ENCODE measurements at regions of chr11 and their contacts with region 1.

Region 1: DNA sequence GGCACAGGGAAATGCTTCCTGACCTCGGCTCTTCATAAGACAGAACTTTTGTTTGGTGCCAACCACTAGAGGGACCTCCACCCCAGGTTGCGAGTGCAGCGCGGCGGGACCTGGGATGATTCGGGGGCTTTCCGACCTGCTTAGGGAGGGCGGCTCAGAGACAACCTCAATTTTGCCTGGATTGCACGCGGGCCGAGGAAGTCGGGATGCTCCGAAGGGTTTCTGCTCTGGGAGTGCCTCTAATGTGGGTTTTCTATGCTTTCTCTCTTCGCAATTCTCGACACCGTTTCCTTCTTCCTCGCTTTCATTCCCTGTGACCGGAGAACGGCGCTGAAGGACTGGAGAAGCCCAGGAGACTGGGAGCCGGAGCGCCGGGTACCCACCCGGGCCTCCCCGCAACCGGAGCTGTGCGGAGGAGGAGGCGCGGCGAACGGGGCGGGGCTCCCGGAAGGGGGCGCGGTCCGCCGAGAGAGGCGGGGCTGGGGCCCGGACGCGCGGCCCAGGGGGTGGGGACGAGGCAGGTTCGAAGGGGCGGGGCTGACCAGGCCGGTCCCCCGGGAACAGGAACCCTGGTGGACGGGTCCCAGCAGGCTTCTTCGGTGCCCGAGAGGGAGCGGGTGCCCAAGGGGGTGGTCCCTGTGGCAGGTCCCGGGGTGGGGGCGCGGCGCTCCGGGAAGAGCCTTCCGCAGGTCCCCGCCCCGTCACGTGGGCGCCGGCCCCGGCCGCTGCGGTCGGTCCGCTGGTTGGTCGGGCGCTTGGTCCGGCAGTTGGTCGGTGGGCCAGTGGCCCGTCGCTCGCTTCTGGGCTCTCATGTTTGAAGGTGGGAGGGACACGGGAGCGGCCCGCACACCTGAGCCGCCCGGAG is at the start of gene PPFIBP2:
- DNase-seq: peak; percentile 92
- CTCF ChIP-seq: peak; percentile 60

Region 2: DNA sequence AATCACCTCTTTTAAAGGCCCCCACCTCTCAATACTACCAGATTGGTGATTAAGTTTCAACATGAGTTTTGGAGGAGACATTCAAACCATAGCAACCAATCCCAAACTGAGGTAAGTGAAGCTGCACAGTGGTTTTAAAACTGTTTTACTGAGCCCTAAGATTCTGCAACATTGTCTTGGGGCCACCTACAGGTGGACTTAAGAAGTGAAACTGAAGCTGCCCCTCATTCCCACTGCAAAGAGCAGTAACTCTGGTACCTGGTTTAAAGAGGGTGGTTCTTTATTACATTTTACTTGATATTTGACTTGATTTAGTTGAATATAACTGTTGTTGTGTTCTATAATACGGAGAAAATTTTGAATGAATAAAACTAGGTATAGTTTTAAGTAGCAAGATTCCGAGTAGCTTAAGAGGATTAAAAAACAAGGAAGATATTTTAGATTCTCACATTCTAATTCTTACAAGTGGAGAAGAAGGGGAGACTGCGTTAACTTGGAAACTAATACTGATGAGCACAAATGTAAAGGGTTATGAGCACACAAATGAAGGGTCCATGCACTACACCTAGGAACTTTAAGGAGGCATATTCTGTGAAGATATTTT is 235.1 kb before region 1 on chr11:
- CTCF ChIA-PET with region 1: no interaction called
- POLR2A ChIA-PET with region 1: no interaction called
- DNase-seq: peak; percentile 31
- CTCF ChIP-seq: peak; percentile 56

Region 3: DNA sequence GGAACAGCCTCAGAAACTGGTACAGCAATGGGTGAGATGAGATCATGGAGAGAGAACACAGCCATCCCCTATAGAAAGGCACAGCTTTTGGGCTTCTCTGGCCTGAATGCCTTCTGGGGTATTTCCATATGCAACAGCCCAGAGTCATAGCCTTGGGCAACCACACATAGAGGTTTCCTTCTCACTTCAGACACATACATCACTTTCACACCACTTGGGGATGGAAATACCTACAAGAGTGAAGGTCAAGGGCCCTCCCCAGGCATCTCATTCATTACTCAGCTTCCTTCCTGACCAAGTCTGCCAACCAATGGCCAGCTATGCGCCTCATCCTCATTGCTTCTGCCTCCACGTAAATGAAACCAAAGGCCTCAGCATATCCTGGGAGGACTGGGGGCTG is 45.8 kb before region 1 on chr11:
- CTCF ChIA-PET with region 1: interaction called, 10 read pairs
- POLR2A ChIA-PET with region 1: no interaction called
- DNase-seq: peak; percentile 27
- CTCF ChIP-seq: no peak

Region 4: GRCh38 chr11:7495882-7496551 is 17.4 kb before region 1 on chr11:
- CTCF ChIA-PET with region 1: interaction called, 29 read pairs
- POLR2A ChIA-PET with region 1: no interaction called
- DNase-seq: peak; percentile 58
- CTCF ChIP-seq: no peak

Region 5: GRCh38 chr11:7501894-7502293 is 11.6 kb before region 1 on chr11:
- CTCF ChIA-PET with region 1: interaction called, 29 read pairs
- POLR2A ChIA-PET with region 1: interaction called, 3 read pairs
- DNase-seq: no peak
- CTCF ChIP-seq: no peak

Region 6: DNA sequence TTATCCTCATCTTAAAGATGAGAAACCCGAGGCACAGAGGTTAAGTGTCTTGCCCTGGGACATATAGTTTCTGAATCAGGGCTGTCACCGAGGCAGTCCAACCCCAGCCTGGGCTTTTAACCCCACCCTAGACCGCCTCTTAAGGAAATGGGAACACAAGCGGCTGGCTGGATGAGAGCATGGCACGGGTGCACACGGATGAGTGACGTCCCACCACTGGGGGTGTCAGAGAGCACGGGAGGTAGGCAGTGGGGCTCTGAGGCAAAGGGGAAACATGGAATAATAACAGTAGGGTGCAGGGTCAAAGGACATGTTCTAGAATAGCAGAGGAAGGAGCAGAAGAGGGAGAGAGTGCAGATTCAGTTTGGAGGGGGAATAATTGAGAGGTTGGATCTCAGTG is 22.6 kb after region 1 on chr11:
- CTCF ChIA-PET with region 1: interaction called, 20 read pairs
- POLR2A ChIA-PET with region 1: no interaction called
- DNase-seq: no peak
- CTCF ChIP-seq: no peak

Region 7: DNA sequence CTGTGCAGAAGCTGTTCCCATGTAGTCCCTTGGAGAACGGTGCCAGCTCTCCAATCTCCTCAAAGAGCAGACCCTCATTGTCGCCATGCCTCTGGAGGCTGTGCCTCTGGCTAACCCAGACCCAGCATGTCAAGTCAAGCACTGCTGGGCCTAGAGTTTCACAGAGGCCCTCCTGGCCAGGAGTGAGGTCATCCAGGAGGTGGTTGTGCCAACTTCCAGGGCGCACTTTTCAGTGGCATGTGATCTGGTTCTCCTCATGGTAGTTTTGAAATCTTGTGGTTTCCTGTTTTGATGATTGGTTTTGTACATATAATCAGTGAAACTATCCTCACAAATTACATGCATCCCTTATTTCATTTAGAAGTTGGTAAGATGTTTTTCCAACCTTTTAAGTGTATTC is 79.2 kb after region 1 on chr11:
- CTCF ChIA-PET with region 1: no interaction called
- POLR2A ChIA-PET with region 1: no interaction called
- DNase-seq: no peak
- CTCF ChIP-seq: no peak